ENCODE measurements at regions of chr12 and their contacts with region 1.

Region 1: GRCh38 chr12:62813031-62813829 is 121.7 kb downstream of the PPM1H start:
- DNase-seq: no peak

Region 2: DNA sequence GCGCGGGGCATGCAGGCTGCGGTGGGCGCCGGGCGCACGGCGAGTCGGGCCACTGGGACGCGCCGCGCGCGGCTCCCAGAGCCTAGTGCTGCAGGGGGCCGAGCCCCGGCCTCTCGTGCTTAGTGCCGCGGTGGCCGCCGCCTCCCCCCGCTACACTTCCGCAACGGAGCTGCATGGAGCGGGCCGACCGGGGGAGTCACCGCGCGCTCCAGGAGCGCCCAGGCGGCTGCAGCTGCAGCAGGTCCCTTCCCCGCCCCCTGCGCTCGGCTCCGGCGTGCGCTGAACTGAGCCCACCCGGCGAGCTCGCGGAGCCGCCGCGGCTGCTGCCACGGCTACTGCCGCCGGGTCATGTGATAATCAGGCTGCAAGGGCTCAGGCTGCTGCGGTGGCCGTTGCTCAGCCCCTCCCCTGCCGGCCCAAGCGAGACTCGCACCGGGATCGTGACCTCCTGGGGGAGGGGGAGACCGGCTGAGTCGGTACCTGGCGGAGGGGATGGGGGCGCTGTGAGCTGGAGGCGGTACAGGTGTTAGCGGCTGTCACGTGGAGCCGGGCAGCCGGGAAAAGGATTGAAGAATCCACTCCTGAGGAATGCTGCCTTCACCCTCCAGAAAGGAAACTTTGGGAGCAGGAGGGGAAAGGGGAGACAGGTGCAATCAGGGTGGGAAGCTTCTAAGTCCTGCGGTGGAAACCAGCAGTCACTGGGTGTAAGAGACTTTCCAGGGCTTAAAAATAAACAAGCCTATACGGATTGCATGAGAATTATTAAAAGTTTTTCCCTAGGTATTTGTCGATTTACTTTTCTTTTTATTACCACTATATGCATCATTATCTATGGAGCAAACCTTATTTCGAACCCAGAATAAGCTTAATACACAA is 121.8 kb after region 1 on chr12 and contains the start of gene PPM1H:
- intact Hi-C with region 1: loop called (anchors 2 kb)
- DNase-seq: peak; percentile 85
- total RNA-seq, gene PPM1H: 4.0 TPM

Region 3: DNA sequence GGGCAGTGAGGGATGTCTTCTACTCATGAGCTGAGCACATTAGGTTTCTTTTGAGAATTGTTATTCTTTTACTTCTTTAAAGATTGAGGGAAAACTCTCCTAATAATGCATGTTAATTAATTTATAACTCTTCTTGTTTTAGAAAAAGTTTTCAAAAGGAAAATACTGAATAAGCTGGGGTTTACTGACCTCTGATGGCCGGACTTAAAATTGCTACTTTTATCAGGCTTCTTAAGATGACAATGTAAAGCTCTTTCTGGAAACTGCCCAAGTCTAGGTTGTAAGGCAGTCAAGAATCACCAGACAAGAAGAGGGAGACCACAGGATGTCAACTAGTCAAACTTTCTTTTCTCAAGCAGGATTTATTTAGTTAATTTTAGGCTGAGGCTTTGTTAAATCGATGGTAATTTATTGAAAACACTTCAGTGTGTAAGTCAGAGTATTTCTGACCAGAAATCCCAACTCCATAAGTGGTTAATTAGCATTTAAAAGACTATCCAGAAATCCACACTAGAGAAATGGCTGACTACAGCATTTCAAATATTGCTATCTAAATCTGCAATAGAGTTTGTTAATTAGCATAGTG is 255.7 kb after region 1 on chr12:
- intact Hi-C with region 1: loop called (anchors 2 kb)
- DNase-seq: no peak